Caco-2 (cell line): ENCODE measurements at regions of chr10 and their contacts with region 1.

Region 1: DNA sequence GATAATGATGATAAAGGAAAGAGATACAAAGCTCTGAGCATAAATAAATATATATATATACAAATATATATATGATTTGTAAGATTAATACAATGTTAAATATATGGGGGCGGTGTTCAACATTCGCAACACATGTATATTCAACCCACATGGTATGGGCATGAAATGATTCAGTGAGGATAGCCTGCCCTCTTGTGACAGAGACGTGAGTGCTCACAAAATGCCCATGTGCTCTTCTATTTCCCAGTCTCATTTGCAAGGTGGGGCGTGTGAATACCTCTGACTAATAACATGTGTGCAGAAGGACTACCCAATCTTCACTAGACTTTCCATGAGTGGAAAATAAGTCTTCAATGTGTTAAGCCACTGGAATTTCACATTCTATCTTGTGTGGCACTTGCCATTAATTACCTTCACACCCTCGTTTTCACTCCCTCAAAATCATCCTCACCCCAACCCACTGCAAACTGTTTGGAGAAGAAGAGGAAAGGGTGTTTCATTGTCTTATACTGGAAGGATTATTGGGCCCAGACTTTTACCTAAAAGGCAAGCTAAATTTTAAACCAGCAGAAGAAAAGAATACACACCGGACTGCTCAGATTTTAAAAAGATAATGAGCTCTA is 26.9 kb downstream of the ASAH2 start:
- DNase-seq: peak; percentile 61 to 71
- H3K4me3 ChIP-seq: no peak overlapping the region
- H3K4me3 Mint-ChIP-seq: no peak overlapping the region
- H3K27ac Mint-ChIP-seq: no peak overlapping the region
- H3K4me1 ChIP-seq: no peaks in the 10 kb centered on the region
- H3K4me1 Mint-ChIP-seq: peaks cover 2% of the 10 kb centered on the region
- H3K27me3 ChIP-seq: no peaks in the 10 kb centered on the region
- H3K27me3 Mint-ChIP-seq: peaks cover 4% of the 10 kb centered on the region
- CTCF ChIP-seq: peak; percentile 85 to 91

Region 2: DNA sequence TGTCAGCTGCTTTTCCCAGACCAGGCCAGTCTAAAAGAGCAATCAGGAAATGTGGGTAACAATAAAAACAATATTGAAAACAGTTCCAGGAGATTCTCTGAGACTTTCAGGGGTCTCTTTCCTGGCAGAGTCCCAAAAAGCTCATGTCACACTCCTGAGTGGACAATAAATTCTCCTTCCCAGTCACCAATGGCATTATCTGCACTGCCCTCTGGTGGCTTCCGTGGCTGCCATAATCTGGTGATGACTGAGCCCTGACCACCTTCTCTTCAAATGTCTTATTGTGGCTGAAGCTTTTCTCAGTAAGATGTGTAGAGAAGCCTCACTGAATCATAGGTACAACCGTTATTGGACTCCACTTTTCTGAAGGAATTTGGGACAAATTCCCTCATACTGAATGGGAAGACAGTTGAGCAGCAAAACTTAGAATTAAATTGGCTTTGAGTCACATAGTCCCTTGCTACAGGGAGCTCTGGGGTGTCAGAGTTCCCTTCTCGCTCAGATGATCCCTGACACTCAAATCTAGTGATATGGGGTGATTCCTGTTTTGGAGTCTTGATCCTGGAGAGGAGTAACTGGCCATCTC is 51.3 kb after region 1 on chr10:
- CTCF ChIA-PET with region 1: interaction called, 3 read pairs
- POLR2A ChIA-PET with region 1: no interaction called
- intact Hi-C with region 1: loop called (anchors 1 kb)
- DNase-seq: peak; percentile 55 to 74
- H3K4me3 ChIP-seq: no peak overlapping the region
- H3K4me3 Mint-ChIP-seq: no peak overlapping the region
- H3K27ac Mint-ChIP-seq: no peak overlapping the region
- H3K4me1 ChIP-seq: no peaks in the 10 kb centered on the region
- H3K4me1 Mint-ChIP-seq: peaks cover 5% of the 10 kb centered on the region
- H3K27me3 ChIP-seq: peaks cover 4% of the 10 kb centered on the region; the same call in 1 of the 2 replicates
- H3K27me3 Mint-ChIP-seq: peaks cover 12% of the 10 kb centered on the region
- CTCF ChIP-seq: peak; percentile 78 to 93